ENCODE measurements at regions of chr20 and their contacts with region 1.

Region 1: GRCh38 chr20:59087829-59088433 is 45.3 kb upstream of the PRELID3B start:
- DNase-seq: peak; percentile 93
- ATAC-seq: peak; percentile 75
- H3K4me3 Mint-ChIP-seq: no peak overlapping the region
- H3K27ac Mint-ChIP-seq: no peak overlapping the region
- H3K4me1 Mint-ChIP-seq: peaks cover 4% of the 10 kb centered on the region
- H3K27me3 Mint-ChIP-seq: no peaks in the 10 kb centered on the region
- CTCF ChIP-seq: peak; percentile 98

Region 2: GRCh38 chr20:58986968-58987517 is 100.9 kb before region 1 on chr20:
- CTCF ChIA-PET with region 1: no interaction called
- POLR2A ChIA-PET with region 1: no interaction called
- intact Hi-C with region 1: no loop called
- DNase-seq: no peak
- ATAC-seq: no peak
- H3K4me3 Mint-ChIP-seq: no peak overlapping the region
- H3K27ac Mint-ChIP-seq: peak overlapping the region; percentile 10
- H3K4me1 Mint-ChIP-seq: peaks cover 29% of the 10 kb centered on the region
- H3K27me3 Mint-ChIP-seq: no peaks in the 10 kb centered on the region
- CTCF ChIP-seq: no peak

Region 3: DNA sequence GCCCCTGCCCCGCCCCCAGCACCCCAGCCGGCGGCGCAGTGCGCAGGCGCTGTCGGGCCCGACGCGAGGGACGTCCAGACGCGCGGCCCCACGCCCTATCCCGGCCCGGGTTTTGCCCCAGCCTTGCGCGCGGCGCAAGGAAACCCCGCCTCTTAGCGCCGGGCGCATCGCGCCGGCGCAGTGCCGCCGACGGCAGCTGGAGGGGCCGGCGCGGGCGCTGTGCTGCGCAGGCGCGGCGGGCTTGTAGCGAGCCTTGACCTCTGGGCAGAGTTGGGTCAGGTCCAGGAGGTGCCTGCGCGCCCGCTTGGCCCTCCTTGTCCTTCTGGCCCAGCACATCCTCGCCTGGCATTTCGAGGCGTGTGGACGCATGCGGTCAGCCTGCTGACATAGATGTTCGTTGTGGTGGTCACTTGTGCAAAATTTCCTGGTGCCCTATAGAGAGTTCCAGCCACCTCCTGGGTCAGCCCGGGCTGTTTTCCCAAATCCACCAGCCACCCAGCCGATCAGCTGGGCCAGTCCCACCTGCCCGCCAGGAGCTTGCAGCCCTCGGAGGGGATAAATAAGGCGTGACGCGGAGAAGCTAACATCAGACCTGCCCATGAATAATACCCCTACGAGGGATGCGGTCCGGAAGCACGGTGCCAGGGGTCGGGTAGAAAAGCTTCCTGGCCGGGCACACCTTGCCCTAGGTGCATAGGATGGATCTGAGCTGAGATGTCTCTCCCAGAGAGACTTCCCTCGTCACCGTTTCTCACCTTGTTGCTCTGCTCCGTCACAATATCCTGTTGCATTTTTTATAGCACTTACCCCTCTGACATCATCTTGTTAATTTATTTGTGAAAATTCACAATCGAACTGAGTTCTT is 44.9 kb before region 1 on chr20:
- CTCF ChIA-PET with region 1: interaction called, 10 read pairs
- POLR2A ChIA-PET with region 1: interaction called, 4 read pairs
- intact Hi-C with region 1: no loop called
- DNase-seq: peak; percentile 93
- ATAC-seq: peak; percentile 97
- H3K4me3 Mint-ChIP-seq: peak overlapping the region; percentile 92
- H3K27ac Mint-ChIP-seq: peak overlapping the region; percentile 94
- H3K4me1 Mint-ChIP-seq: peaks cover 47% of the 10 kb centered on the region
- H3K27me3 Mint-ChIP-seq: no peaks in the 10 kb centered on the region
- CTCF ChIP-seq: no peak

Region 4: GRCh38 chr20:59102841-59103299 is 14.9 kb after region 1 on chr20:
- CTCF ChIA-PET with region 1: interaction called, 48 read pairs
- POLR2A ChIA-PET with region 1: no interaction called
- intact Hi-C with region 1: no loop called
- DNase-seq: no peak
- ATAC-seq: peak; percentile 77
- H3K4me3 Mint-ChIP-seq: no peak overlapping the region
- H3K27ac Mint-ChIP-seq: peak overlapping the region; percentile 26
- H3K4me1 Mint-ChIP-seq: peaks cover 17% of the 10 kb centered on the region
- H3K27me3 Mint-ChIP-seq: no peaks in the 10 kb centered on the region
- CTCF ChIP-seq: no peak

Region 5: GRCh38 chr20:59141787-59142581 is 54.1 kb after region 1 on chr20:
- CTCF ChIA-PET with region 1: interaction called, 13 read pairs
- POLR2A ChIA-PET with region 1: no interaction called
- intact Hi-C with region 1: no loop called
- DNase-seq: no peak
- ATAC-seq: no peak
- H3K4me3 Mint-ChIP-seq: no peak overlapping the region
- H3K27ac Mint-ChIP-seq: no peak overlapping the region
- H3K4me1 Mint-ChIP-seq: peaks cover 51% of the 10 kb centered on the region
- H3K27me3 Mint-ChIP-seq: no peaks in the 10 kb centered on the region
- CTCF ChIP-seq: no peak

Region 6: GRCh38 chr20:59177261-59178250 is 89.6 kb after region 1 on chr20:
- CTCF ChIA-PET with region 1: interaction called, 11 read pairs
- POLR2A ChIA-PET with region 1: interaction called, 3 read pairs
- intact Hi-C with region 1: no loop called
- DNase-seq: peak; percentile 70
- ATAC-seq: peak; percentile 90
- H3K4me3 Mint-ChIP-seq: peak overlapping the region; percentile 61
- H3K27ac Mint-ChIP-seq: peak overlapping the region; percentile 95
- H3K4me1 Mint-ChIP-seq: peaks cover 85% of the 10 kb centered on the region
- H3K27me3 Mint-ChIP-seq: no peaks in the 10 kb centered on the region
- CTCF ChIP-seq: no peak

Region 7: DNA sequence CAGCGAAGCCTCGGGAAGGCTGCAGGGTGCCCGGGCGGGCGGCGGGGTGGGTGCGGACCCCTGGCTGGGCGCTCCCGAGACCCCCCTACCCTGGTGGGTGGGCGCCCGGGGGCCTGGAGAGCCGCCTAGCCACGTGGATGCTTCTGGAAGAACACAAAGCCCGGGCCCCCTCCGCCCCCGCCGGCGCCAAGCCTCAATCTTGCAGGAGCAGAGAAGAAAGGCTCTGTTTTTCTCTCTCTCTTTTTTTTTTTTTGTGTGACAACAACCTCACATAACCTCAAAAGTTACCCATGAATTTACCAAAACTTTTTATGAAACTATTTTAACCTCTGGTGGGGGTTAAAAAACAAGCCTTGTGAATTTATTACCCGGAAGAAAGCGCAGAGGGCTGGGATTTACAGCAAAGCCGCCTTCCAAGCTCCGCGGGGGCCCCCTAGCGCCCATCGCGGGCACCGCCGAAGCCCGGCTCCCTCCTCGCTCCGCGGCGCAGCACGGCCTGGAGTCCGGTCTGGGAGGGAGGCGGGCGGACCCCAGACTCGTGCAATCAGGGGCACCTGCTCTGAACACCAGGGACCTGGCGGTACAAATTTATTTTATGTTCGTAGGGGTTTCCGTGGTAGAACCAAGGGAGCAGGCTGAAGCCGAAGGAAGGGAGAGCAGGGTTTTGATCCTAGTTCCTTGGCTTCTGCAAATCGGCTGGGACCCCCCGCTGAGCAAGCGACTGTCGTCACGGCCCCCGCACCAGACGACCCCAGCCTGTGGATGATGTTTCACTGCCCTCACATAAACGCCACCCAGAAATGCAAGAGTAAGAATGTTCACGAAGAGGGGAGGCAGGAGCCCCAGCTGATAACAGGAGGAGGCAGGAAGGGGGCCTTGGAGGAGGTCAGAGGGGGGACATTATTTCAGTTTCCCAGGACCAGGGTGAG is 134.6 kb after region 1 on chr20:
- CTCF ChIA-PET with region 1: interaction called, 47 read pairs
- POLR2A ChIA-PET with region 1: no interaction called
- intact Hi-C with region 1: loop called (anchors 5 kb)
- DNase-seq: peak; percentile 86
- ATAC-seq: peak; percentile 96
- H3K4me3 Mint-ChIP-seq: peak overlapping the region; percentile 68
- H3K27ac Mint-ChIP-seq: peak overlapping the region; percentile 76
- H3K4me1 Mint-ChIP-seq: peaks cover 31% of the 10 kb centered on the region
- H3K27me3 Mint-ChIP-seq: no peaks in the 10 kb centered on the region
- CTCF ChIP-seq: peak; percentile 91